CD14-positive monocyte (primary cell): ENCODE measurements at regions of chr5 and their contacts with region 1.

Region 1: DNA sequence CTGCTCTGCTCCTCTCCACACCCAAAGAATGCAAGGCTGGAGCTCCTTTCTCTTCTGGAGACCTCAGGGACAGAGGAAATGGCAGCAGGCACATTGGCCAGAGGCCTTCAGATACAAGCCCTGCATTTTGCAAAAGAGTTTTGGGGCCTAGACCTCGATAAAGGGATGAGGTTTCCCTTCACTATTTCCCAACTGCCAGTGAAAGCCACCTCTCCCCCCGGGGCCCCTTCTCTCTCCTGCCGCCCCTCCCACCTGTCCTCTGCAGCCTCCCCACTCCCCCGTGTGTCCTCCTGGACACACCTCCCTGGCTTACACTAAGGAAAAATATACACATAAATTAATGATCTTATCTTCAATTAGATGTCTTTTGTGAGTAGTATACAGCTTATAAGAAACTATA is 21.3 kb upstream of the LMNB1 start:
- DNase-seq: no peak
- H3K4me3 ChIP-seq: no peak overlapping the region
- H3K4me3 Mint-ChIP-seq: no peak overlapping the region
- H3K27ac ChIP-seq: peak overlapping the region; percentile 72 to 81
- H3K27ac Mint-ChIP-seq: peak overlapping the region; percentile 81 to 95 (median 88)
- H3K4me1 ChIP-seq: peaks cover 84 to 99% of the 10 kb centered on the region in 2 donors
- H3K4me1 Mint-ChIP-seq: peaks cover 87% of the 10 kb centered on the region
- H3K27me3 ChIP-seq: no peaks in the 10 kb centered on the region
- H3K27me3 Mint-ChIP-seq: peaks cover 0 to 1% (median 0%) of the 10 kb centered on the region in 3 donors
- CTCF ChIP-seq: no peak

Region 2: DNA sequence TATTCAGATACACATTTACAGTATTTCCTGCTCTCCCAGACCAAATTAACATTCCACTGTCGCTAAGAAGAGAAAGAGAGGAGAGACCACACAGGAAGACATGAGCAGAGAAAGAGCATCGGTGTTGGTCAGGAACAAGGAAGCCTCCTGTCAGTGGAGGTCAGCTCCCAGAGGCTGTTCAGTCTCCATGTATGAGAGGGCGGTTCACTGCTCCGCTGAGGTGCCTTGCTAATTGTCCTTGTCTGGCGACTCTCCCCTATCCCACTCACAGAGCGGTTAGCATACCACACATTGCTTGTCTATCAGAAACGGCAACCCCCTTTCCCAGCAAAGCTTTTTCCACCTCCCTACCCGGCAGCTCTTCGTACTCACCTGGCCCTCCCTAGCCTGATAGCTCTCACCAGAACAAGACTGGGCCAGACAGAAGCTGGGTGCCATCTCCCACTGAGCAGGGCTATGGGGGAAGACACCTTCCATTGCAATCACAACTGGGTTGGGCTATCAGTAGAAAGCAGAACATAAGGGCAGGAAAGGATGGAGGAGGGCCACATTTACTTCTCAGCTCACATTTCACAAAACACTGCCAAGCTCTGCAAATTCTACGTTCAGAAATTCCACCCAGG is 37.2 kb before region 1 on chr5:
- intact Hi-C with region 1: loop called in 1 of 2 experiments (anchors 5 kb)
- DNase-seq: no peak
- H3K4me3 ChIP-seq: no peak overlapping the region
- H3K4me3 Mint-ChIP-seq: peak overlapping the region in 1 of 2 donors; percentile 37
- H3K27ac ChIP-seq: peak overlapping the region in 1 of 2 donors; percentile 22
- H3K27ac Mint-ChIP-seq: peak overlapping the region in 5 of 7 donors; percentile 17 to 81 (median 41)
- H3K4me1 ChIP-seq: peaks cover 38 to 42% of the 10 kb centered on the region in 2 donors
- H3K4me1 Mint-ChIP-seq: peaks cover 32% of the 10 kb centered on the region
- H3K27me3 ChIP-seq: no peaks in the 10 kb centered on the region
- H3K27me3 Mint-ChIP-seq: peaks cover 0 to 5% (median 0%) of the 10 kb centered on the region in 3 donors
- CTCF ChIP-seq: no peak